ENCODE measurements at regions of chr19 and their contacts with region 1.

Region 1: GRCh38 chr19:2610637-2611482 is 91.6 kb downstream of the GNG7 start:
- DNase-seq: peak; percentile 93 to 95 (median 95)
- ATAC-seq: peak; percentile 91 to 97 (median 94)
- H3K4me3 ChIP-seq: peak overlapping the region; percentile 24 to 55 (median 51)
- H3K27ac ChIP-seq: peak overlapping the region; percentile 63 to 96 (median 89)
- H3K4me1 ChIP-seq: peaks cover 0 to 7% (median 2%) of the 10 kb centered on the region in 4 donors
- H3K27me3 ChIP-seq: no peaks in the 10 kb centered on the region
- CTCF ChIP-seq: peak; percentile 96 to 99 (median 99)
- POLR2A ChIP-seq: peak; percentile 70

Region 2: GRCh38 chr19:2475702-2476450 is 135.0 kb before region 1 on chr19 and contains the start of gene GADD45B:
- intact Hi-C with region 1: loop called in 1 of 2 experiments (anchors 10 kb)
- DNase-seq: peak; percentile 98 to 99 (median 99)
- ATAC-seq: peak; percentile 61 to 82 (median 70)
- H3K4me3 ChIP-seq: peak within 1 kb of the TSS; percentile 71 to 96 (median 77)
- H3K27ac ChIP-seq: peak within 1 kb of the TSS; percentile 81 to 97 (median 93)
- H3K4me1 ChIP-seq: peaks cover 0 to 13% (median 0%) of the 10 kb centered on the region in 4 donors
- H3K27me3 ChIP-seq: no peaks in the 10 kb centered on the region
- CTCF ChIP-seq: no peak
- POLR2A ChIP-seq: peak; percentile 100
- total RNA-seq, gene GADD45B: 39.0 to 176 (median 127) TPM

Region 3: DNA sequence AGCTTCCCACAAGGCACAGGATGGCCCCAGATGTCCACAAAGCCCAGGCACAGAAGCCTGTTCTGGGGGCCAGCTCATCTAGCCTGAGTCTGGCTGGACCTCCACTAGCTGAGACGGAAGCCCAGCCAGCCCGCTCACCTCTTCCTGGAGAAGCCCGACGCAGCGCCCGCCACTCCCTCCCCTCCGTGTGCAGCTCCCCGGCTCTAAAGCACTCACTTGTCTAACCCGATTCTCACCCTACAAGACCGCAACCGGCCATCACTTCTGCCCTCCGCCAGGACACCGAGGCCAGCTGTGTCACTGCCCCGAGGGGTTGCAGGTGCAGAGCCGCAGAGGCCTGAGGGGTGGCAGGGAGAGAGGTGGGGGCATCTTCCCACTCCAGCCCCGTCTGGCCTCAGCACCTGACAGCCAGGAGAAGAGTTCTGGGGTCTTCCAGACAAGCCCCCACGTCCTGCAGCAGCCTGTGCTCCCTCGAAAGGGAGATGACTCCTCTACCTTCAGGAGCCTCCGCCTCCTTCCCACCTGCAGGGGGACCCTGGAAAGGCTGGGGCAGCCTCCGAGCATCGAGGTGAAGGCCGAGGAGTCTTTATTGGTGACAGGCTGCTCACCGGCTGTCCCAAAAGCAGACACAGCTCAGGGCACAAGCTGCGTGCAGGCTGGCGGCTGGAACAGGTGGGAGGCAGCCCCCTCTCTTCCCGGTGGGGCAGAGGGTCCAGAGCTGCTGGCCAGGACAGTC is 116.2 kb after region 1 on chr19:
- intact Hi-C with region 1: no loop called
- DNase-seq: no peak
- ATAC-seq: no peak
- H3K4me3 ChIP-seq: no peak overlapping the region
- H3K27ac ChIP-seq: no peak overlapping the region
- H3K4me1 ChIP-seq: no peaks in the 10 kb centered on the region
- H3K27me3 ChIP-seq: no peaks in the 10 kb centered on the region
- CTCF ChIP-seq: no peak
- POLR2A ChIP-seq: no peak

Measured in right lobe of liver (tissue), 6 donors.